SK-N-SH (cell line): ENCODE measurements at regions of chr1 and their contacts with region 1.

Region 1: DNA sequence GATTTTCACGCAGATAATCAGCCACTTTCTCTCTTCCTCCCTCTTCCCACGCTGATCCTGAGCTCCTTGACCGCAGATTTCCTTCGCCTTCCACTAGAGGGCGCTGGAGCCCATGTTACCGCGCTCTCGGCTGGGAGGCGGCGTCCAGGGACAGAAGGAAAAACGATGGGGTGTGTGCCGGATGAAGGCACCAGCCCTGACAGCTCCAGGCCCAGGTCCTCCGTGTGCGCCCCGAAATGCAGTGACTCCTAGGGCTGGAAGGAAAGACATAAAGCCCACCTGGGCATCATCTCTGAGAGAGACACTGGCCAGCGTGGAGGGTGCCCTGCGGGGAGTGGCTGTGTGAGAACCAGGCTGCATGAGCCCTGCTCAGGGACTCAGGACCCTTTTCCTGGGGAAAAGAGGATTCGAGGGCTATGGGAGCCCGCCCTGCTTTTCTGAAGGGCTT is 44.9 kb upstream of the CYP2J2 start:
- DNase-seq: peak; percentile 88
- H3K4me3 ChIP-seq: peak overlapping the region; percentile 13 to 42; a peak in 3 of 4 replicates
- H3K27ac ChIP-seq: no peak overlapping the region
- H3K4me1 ChIP-seq: peaks cover 0 to 5% of the 10 kb centered on the region in 2 experiments; a peak in 1 of 4 replicates
- H3K27me3 ChIP-seq: no peaks in the 10 kb centered on the region
- CTCF ChIP-seq: peak; percentile 96
- EP300 ChIP-seq: no peak
- RAD21 ChIP-seq: peak; percentile 93

Region 2: DNA sequence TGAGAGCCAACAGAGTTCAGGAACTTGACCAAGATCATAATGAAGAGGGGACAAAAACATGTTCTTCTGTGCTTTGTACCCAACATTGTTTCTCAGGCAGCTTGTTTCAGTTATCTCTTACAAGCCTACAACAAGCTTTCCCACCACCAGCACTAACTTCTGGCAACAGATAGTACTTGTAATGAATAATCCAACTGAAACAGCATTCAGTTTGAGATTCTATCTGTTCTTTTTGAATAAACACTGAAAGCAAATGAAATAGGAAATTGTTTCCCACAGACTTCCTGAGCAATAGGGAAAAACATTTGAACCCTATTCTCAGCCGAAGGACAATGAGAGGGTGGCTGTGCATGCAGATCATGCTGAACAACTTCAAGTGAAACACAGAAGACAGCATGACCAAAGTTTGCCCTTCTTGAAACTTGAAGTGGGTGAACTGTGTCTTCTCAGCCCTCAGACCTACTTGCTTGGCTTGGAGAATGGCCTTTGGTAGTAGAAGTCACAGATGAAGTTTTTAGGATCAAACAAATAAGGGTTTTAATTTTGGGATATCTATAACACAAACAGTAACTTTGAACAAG is 167.9 kb before region 1 on chr1:
- CTCF ChIA-PET with region 1: no interaction called
- POLR2A ChIA-PET with region 1: no interaction called
- DNase-seq: no peak
- H3K4me3 ChIP-seq: no peak overlapping the region
- H3K27ac ChIP-seq: no peak overlapping the region
- H3K4me1 ChIP-seq: no peaks in the 10 kb centered on the region; a peak in 1 of 4 replicates
- H3K27me3 ChIP-seq: no peaks in the 10 kb centered on the region
- CTCF ChIP-seq: no peak
- EP300 ChIP-seq: no peak
- RAD21 ChIP-seq: no peak

Region 3: GRCh38 chr1:59999006-59999405 is 27.5 kb after region 1 on chr1:
- CTCF ChIA-PET with region 1: interaction called, 12 read pairs
- POLR2A ChIA-PET with region 1: no interaction called
- DNase-seq: no peak
- H3K4me3 ChIP-seq: no peak overlapping the region
- H3K27ac ChIP-seq: no peak overlapping the region
- H3K4me1 ChIP-seq: peaks cover 0 to 18% of the 10 kb centered on the region in 2 experiments; a peak in 1 of 4 replicates
- H3K27me3 ChIP-seq: no peaks in the 10 kb centered on the region
- CTCF ChIP-seq: no peak
- EP300 ChIP-seq: no peak
- RAD21 ChIP-seq: no peak

Region 4: DNA sequence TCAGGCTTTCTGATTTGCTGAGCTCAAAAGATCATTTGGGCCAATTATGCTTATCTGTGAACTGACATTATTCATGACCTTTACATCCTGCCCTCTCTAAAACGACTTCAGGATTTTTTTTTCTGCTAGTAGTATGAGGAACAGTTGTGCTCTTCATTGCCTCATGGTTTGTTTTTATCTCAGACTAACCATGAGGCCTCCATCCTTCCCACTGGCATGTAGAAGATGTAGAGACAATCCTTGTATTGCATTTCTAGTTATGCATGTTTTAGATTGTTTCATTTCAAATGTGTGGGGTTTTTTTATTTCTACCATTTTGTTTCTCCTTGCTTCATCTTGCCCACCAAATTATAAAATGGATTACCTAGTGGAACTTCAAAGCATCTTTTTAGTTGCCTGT is 184.9 kb after region 1 on chr1:
- CTCF ChIA-PET with region 1: interaction called, 15 read pairs
- POLR2A ChIA-PET with region 1: no interaction called
- DNase-seq: no peak
- H3K4me3 ChIP-seq: no peak overlapping the region
- H3K27ac ChIP-seq: no peak overlapping the region
- H3K4me1 ChIP-seq: peaks cover 0 to 3% of the 10 kb centered on the region in 2 experiments; a peak in 2 of 4 replicates
- H3K27me3 ChIP-seq: no peaks in the 10 kb centered on the region
- CTCF ChIP-seq: no peak
- EP300 ChIP-seq: no peak
- RAD21 ChIP-seq: no peak

Region 5: GRCh38 chr1:61337981-61338848 is 1366.7 kb after region 1 on chr1:
- CTCF ChIA-PET with region 1: interaction called, 10 read pairs
- POLR2A ChIA-PET with region 1: no interaction called
- DNase-seq: peak; percentile 73
- H3K4me3 ChIP-seq: peak overlapping the region in 1 of 2 experiments; percentile 18; a peak in 1 of 4 replicates
- H3K27ac ChIP-seq: peak overlapping the region; percentile 59 to 61
- H3K4me1 ChIP-seq: peaks cover 16 to 25% of the 10 kb centered on the region in 2 experiments; a peak in 3 of 4 replicates
- H3K27me3 ChIP-seq: no peaks in the 10 kb centered on the region
- CTCF ChIP-seq: peak; percentile 88
- EP300 ChIP-seq: 0 out of 4 replicates have a peak, but pooled peaks of 1 of the 2 experiments have one; percentile 29
- RAD21 ChIP-seq: peak; percentile 98